ENCODE measurements at regions of chrX and their contacts with region 1.

Region 1: GRCh38 chrX:15438332-15438731 is 54.1 kb upstream of the VEGFD start:
- DNase-seq: no peak
- H3K4me3 ChIP-seq: no peak overlapping the region
- H3K27ac ChIP-seq: no peak overlapping the region
- H3K4me1 ChIP-seq: no peaks in the 10 kb centered on the region
- H3K27me3 ChIP-seq: no peaks in the 10 kb centered on the region
- CTCF ChIP-seq: no peak

Region 2: GRCh38 chrX:14729058-14729457 is 709.3 kb before region 1 on chrX:
- CTCF ChIA-PET with region 1: no interaction called
- POLR2A ChIA-PET with region 1: no interaction called
- intact Hi-C with region 1: no loop called
- DNase-seq: no peak
- H3K4me3 ChIP-seq: no peak overlapping the region
- H3K27ac ChIP-seq: no peak overlapping the region
- H3K4me1 ChIP-seq: no peaks in the 10 kb centered on the region
- H3K27me3 ChIP-seq: no peaks in the 10 kb centered on the region
- CTCF ChIP-seq: no peak

Region 3: GRCh38 chrX:16979226-16979625 is 1540.9 kb after region 1 on chrX:
- CTCF ChIA-PET with region 1: interaction called, 12 read pairs
- POLR2A ChIA-PET with region 1: no interaction called
- intact Hi-C with region 1: no loop called
- DNase-seq: no peak
- H3K4me3 ChIP-seq: no peak overlapping the region
- H3K27ac ChIP-seq: no peak overlapping the region
- H3K4me1 ChIP-seq: no peaks in the 10 kb centered on the region
- H3K27me3 ChIP-seq: peaks cover 15% of the 10 kb centered on the region
- CTCF ChIP-seq: no peak